WTC11 (cell line): ENCODE measurements at regions of chr3 and their contacts with region 1.

Region 1: GRCh38 chr3:128584412-128585020 is 66.1 kb downstream of the RPN1 start:
- DNase-seq: peak; percentile 82
- ATAC-seq: peak; percentile 99
- H3K4me3 Mint-ChIP-seq: no peak overlapping the region
- H3K27ac Mint-ChIP-seq: no peak overlapping the region
- H3K4me1 Mint-ChIP-seq: peaks cover 14% of the 10 kb centered on the region
- H3K27me3 Mint-ChIP-seq: peaks cover 8% of the 10 kb centered on the region
- CTCF ChIP-seq: 0 out of 2 replicates have a peak, but pooled peaks have one; percentile 42

Region 2: GRCh38 chr3:128503164-128503651 is 81.3 kb before region 1 on chr3:
- CTCF ChIA-PET with region 1: interaction called, 21 read pairs
- POLR2A ChIA-PET with region 1: no interaction called
- DNase-seq: no peak
- ATAC-seq: peak; percentile 74
- H3K4me3 Mint-ChIP-seq: no peak overlapping the region
- H3K27ac Mint-ChIP-seq: no peak overlapping the region
- H3K4me1 Mint-ChIP-seq: no peaks in the 10 kb centered on the region
- H3K27me3 Mint-ChIP-seq: peaks cover 49% of the 10 kb centered on the region
- CTCF ChIP-seq: no peak